Activated CD4-positive, alpha-beta memory T cell treated with anti-CD3 and anti-CD28 coated beads, Interleukin-2, amount 10 ng/mL, durations not matched to agents 7 days and 5 days (primary cell): ENCODE measurements at regions of chr1 and their contacts with region 1.

Region 1: DNA sequence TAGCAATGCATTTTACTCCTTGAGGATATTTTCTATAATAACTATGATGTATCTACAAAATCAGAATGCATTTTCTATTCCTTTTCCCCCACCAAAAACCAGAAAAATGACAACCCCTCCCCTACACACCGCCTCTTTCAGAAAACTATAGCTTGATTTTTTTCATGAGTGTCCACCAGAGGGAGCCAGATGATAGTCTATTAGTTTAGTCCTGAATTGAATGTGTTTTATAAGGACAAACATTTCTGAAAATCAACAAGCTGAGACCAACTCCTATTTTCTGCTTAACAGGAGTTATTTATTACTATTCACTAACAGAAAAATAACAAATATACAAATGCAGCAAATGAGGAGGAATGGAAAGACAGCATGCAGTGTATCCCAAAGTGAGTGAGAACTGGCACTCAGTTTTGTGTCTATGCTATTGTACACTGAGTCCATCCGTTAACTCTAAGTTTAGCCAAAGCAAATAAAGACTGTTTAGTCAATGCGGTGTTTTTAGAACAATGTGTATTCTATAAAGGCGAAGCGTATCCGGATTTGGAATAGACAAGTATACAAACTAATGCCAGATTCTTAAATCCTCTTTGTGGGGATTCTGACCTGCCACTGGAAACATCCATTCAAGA is 182.6 kb downstream of the VAV3 start:
- DNase-seq: peak; percentile 23
- H3K4me3 Mint-ChIP-seq: no peak overlapping the region
- H3K27ac Mint-ChIP-seq: no peak overlapping the region
- H3K4me1 Mint-ChIP-seq: peaks cover 24% of the 10 kb centered on the region
- H3K27me3 Mint-ChIP-seq: no peaks in the 10 kb centered on the region

Region 2: GRCh38 chr1:107963601-107964335 is 181.4 kb after region 1 on chr1:
- CTCF ChIA-PET with region 1: interaction called, 11 read pairs
- POLR2A ChIA-PET with region 1: interaction called, 4 read pairs
- DNase-seq: peak; percentile 38
- H3K4me3 Mint-ChIP-seq: peak overlapping the region; percentile 86
- H3K27ac Mint-ChIP-seq: peak overlapping the region; percentile 74
- H3K4me1 Mint-ChIP-seq: peaks cover 33% of the 10 kb centered on the region
- H3K27me3 Mint-ChIP-seq: peaks cover 31% of the 10 kb centered on the region

Region 3: DNA sequence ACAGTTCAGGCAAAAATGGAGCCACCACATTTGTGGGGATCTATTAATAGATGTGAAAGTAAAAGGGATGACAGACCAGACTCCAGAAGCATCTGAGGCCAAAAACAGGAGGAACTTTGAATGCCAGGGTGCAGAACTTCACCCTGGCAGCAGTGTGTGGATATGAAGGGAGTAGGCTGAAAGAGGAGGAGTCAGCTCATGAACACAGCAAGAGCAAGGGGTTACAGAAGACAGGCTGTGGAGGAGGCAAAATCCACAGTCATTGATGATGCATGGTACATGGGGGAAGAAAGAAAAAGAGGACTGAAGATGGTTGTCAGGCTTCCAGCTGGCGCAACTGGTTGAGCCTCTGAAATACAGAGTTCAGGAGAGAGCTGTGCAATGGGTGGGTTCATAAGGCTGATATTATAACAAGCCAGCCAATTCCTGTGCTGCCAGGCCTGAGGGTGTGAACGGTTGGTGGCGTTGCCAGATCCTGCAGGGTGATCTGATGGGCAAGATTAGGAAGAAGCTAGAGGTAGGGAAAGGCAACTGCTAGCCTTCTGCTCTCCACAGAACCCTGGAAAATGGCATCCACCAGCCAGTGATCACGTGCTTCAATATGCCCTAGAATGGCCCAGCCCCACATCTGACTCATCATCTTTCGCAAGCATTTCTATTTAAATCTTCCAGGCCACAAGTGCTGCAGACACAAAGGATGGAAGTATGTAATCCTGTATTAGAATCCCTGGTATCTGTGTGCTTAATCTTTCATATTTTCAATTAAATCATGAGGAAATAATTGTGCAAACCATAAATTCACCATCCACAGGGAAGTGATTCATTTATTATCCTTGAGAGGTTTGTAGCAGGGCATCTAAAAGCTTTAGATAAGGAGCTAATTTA is 335.9 kb after region 1 on chr1:
- CTCF ChIA-PET with region 1: interaction called, 250 read pairs
- POLR2A ChIA-PET with region 1: interaction called, 4 read pairs
- DNase-seq: no peak
- H3K4me3 Mint-ChIP-seq: no peak overlapping the region
- H3K27ac Mint-ChIP-seq: no peak overlapping the region
- H3K4me1 Mint-ChIP-seq: peaks cover 2% of the 10 kb centered on the region
- H3K27me3 Mint-ChIP-seq: peaks cover 11% of the 10 kb centered on the region

Region 4: DNA sequence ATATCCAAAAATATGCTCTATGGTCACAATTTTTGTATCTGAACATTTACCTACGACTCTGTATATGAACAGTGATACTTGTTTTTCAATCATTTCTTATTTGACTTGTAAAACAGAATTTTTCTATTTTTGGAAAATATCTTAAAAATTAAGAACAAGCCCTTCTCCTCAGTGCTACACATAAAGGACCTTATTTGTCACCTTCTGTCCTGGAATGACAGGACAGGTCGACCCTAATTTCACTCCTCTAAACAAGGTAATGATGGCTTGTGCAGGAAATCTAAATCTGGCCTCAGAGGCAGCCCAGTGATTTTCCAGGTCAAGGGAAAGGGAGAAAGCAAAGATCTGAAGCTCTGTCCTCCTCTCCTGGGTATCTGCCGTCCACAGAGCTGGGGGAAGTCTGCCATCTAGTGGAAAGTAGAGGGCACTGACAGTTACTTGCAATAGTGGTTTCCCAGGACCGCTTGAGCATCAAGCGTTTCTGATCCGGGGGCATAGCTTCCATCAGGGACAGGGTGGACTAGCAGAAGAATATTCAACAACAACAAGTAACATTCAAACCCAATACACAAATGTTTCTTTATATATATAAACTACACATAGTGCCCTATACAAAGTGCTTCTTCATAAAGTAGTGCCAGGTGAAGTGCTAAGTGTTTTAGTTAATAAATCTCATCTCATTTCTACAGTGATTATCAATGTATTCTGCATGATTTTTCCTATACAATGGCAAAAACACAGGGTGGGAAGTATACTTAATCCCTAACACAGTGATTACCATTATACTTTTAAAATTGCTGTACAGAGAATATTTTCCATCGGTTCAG is 343.2 kb after region 1 on chr1:
- CTCF ChIA-PET with region 1: interaction called, 250 read pairs
- POLR2A ChIA-PET with region 1: interaction called, 20 read pairs
- DNase-seq: peak; percentile 66
- H3K4me3 Mint-ChIP-seq: no peak overlapping the region
- H3K27ac Mint-ChIP-seq: no peak overlapping the region
- H3K4me1 Mint-ChIP-seq: no peaks in the 10 kb centered on the region
- H3K27me3 Mint-ChIP-seq: no peaks in the 10 kb centered on the region